ENCODE measurements at regions of chr1 and their contacts with region 1.

Region 1: DNA sequence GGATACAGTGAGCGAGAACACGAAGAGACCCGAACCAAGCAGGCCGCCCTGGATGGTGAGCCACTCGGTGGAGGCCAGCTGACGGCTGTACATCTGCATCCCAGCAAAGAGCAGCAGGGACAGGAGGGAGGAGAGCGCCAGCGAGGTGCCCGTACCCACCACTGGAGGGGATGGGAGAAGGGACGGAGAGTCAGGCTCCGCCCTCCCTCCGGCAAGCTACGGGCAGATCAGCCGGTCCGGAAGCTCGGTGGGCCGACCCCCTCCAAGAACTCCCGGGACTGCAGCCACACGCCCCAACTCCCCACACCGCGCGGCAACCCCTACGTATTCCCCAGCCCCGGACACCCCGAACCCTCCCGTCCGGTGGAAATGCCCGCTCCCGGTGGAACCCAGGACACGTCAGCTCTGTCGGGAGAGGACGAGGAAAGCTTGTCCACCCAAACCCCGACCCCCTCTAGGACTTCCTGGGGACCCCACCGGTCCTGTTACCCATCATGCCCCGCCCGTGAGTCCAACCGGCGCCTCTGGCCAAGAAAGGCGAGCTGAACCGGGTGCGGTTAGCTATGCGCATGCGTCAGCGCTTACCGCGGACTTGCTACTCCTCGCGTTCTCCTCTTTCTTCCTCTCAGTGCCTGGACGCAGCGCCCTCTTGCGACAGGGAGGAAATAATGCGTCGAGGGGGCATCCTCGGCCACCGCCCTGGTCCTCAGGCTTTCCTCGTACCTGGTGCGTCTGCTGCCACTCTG is at the start of gene KRTCAP2:
- DNase-seq: peak; percentile 97
- ATAC-seq: peak; percentile 83
- H3K4me3 Mint-ChIP-seq: peak within 1 kb of the TSS; percentile 96
- H3K27ac Mint-ChIP-seq: peak within 1 kb of the TSS; percentile 98
- H3K4me1 Mint-ChIP-seq: peaks cover 45% of the 10 kb centered on the region
- H3K27me3 Mint-ChIP-seq: no peaks in the 10 kb centered on the region
- CTCF ChIP-seq: peak; percentile 91
- total RNA-seq, gene KRTCAP2: 124 to 125 TPM

Region 2: GRCh38 chr1:155050560-155051341 is 122.2 kb before region 1 on chr1 and contains the start of gene ADAM15:
- CTCF ChIA-PET with region 1: interaction called, 10 read pairs
- POLR2A ChIA-PET with region 1: no interaction called
- intact Hi-C with region 1: no loop called
- DNase-seq: peak; percentile 80
- ATAC-seq: peak; percentile 79
- H3K4me3 Mint-ChIP-seq: peak within 1 kb of the TSS; percentile 88
- H3K27ac Mint-ChIP-seq: peak within 1 kb of the TSS; percentile 60
- H3K4me1 Mint-ChIP-seq: peaks cover 20% of the 10 kb centered on the region
- H3K27me3 Mint-ChIP-seq: no peaks in the 10 kb centered on the region
- CTCF ChIP-seq: peak; percentile 99
- total RNA-seq, gene ADAM15: 36.4 to 37.2 TPM

Region 3: DNA sequence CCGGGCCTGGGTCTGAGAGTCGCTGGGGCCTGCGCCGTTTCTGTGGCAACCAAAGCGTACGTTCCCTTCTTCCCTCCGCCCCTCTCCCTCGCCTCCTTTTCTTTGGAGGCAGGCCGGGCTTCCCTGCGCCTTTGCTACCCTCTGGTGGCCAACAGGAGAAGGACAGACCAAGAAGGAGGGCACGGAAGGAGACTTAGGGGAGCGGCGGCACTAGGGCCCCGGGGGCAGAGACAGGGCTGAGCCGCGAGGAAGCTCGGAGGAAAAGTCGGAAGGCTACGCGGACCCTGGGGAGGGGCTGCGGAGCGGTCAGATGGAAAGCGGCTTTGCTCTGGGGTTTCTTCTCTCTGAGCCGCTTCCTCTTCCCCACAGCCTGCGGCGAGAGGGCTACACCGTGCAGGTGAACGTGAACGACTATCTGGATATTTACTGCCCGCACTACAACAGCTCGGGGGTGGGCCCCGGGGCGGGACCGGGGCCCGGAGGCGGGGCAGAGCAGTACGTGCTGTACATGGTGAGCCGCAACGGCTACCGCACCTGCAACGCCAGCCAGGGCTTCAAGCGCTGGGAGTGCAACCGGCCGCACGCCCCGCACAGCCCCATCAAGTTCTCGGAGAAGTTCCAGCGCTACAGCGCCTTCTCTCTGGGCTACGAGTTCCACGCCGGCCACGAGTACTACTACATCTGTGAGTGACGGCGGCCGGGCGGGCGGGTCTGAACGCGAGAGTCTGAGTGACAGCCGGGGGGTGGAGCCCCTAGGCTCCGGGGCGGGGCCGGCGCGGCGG is 88.0 kb before region 1 on chr1:
- CTCF ChIA-PET with region 1: interaction called, 312 read pairs
- POLR2A ChIA-PET with region 1: interaction called, 8 read pairs
- intact Hi-C with region 1: no loop called
- DNase-seq: peak; percentile 97
- ATAC-seq: peak; percentile 78
- H3K4me3 Mint-ChIP-seq: peak overlapping the region; percentile 91
- H3K27ac Mint-ChIP-seq: peak overlapping the region; percentile 94
- H3K4me1 Mint-ChIP-seq: peaks cover 26% of the 10 kb centered on the region
- H3K27me3 Mint-ChIP-seq: peaks cover 35% of the 10 kb centered on the region
- CTCF ChIP-seq: peak; percentile 89

Region 4: DNA sequence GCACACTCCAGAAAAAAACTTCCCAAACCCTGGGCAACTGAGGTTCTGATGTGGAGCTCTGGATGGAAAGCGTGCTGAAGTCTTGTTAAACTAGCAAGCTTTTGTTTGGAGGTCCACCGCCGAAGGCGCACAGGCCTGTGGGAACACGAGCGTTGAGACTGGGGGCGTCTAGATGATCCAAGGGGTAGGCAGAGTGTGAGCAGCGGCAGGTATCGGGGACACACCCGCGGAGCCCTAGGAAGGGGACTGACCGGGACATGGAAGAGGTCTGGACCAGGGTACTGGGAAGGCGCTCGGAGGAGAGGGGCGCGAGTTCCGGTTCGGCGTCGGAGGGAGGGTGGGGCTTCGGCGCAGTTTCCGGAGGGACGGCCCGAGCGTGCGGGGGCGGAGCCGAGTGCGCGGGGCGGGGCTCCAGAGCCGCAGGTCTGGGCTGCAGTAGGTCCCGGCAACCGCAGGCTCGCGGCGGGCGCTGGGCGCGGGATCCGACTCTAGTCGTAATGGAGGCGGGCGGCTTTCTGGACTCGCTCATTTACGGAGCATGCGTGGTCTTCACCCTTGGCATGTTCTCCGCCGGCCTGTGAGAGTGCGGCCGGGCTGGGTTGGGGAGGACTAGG is 37.4 kb before region 1 on chr1 and contains the start of gene SLC50A1:
- CTCF ChIA-PET with region 1: interaction called, 69 read pairs
- POLR2A ChIA-PET with region 1: interaction called, 4 read pairs
- intact Hi-C with region 1: no loop called
- DNase-seq: peak; percentile 96
- ATAC-seq: peak; percentile 80
- H3K4me3 Mint-ChIP-seq: peak within 1 kb of the TSS; percentile 99
- H3K27ac Mint-ChIP-seq: peak within 1 kb of the TSS; percentile 99
- H3K4me1 Mint-ChIP-seq: peaks cover 33% of the 10 kb centered on the region
- H3K27me3 Mint-ChIP-seq: no peaks in the 10 kb centered on the region
- CTCF ChIP-seq: no peak
- total RNA-seq, gene SLC50A1: 59.7 to 64.0 TPM

Region 5: DNA sequence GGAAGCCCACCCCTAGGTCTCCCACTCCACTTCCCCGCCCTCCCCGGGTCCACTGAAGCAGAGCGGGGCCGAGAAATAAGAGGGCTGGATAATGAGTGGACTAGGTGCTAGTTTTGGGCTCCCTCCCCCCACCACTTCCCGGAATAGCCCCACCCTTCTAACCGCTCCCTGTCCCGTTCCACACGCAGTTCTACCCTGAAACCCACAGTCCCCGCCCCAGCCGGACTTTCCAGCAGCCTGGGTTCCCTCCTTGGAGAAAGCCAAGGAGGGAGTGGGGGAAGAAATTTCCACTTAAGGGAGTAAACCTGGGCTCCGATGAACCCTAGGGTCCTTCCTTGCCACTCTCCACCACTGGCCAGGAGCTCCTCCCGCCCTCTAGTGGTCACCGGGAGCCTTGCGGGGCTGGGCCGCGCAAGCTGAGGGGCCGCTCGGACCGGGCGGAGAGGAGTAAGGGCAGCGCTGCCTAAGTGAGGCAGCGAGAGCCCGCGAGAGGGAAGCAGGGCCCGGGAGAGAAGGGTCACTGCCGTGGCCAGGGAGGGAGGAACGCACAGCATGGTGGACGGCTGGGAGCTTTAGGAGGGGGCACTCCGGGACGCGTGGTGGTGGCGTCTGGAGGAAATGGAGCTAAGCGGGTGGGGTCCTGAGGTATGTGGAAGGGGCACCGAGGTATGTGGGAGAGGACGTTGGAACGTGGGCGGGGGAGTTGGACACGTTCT is 20.5 kb after region 1 on chr1:
- CTCF ChIA-PET with region 1: interaction called, 175 read pairs
- POLR2A ChIA-PET with region 1: interaction called, 57 read pairs
- intact Hi-C with region 1: no loop called
- DNase-seq: peak; percentile 84
- ATAC-seq: peak; percentile 62
- H3K4me3 Mint-ChIP-seq: peak overlapping the region; percentile 90
- H3K27ac Mint-ChIP-seq: peak overlapping the region; percentile 99
- H3K4me1 Mint-ChIP-seq: peaks cover 28% of the 10 kb centered on the region
- H3K27me3 Mint-ChIP-seq: no peaks in the 10 kb centered on the region
- CTCF ChIP-seq: peak; percentile 98

Region 6: DNA sequence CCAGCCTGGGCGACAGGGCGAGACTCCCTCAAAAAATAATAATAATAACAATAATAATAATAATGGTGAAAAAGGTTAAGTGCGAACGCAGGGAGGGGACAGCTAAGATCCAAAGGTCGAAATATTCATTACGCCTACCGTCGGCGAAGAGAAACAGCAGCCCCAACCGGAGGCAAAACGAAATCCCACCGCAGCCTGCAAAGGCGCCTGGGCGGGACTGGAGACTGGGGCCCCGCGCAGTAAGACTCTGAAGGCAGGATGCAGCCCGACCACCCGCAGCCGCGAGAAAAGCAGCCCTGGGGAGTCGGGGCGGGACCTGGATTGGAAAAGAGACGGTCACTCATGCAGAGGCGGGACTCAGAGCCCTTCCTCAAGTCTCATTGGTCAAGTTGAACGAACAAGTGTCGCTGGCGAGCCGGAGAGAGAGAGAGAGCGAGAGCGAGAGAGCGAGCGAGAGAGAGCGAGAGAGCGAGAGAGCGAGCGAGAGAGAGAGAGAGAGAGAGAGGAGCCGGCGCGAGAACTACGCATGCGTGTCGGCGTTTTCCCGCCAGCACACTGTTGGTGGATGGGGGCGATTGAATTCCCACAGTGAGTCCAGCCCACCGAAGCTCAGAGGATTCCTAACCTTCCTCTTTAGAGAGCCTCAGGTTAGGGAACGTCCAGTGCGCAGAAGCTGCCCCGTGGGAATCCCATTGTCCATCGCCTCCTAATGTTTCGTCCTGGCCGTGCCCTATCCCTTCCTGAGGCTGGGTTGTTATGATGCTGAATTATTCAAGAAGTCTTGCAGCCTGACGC is 71.7 kb after region 1 on chr1:
- CTCF ChIA-PET with region 1: interaction called, 10 read pairs
- POLR2A ChIA-PET with region 1: interaction called, 5 read pairs
- intact Hi-C with region 1: no loop called
- DNase-seq: peak; percentile 100
- ATAC-seq: peak; percentile 97
- H3K4me3 Mint-ChIP-seq: peak overlapping the region; percentile 71
- H3K27ac Mint-ChIP-seq: peak overlapping the region; percentile 95
- H3K4me1 Mint-ChIP-seq: peaks cover 41% of the 10 kb centered on the region
- H3K27me3 Mint-ChIP-seq: peaks cover 2% of the 10 kb centered on the region
- CTCF ChIP-seq: peak; percentile 39

Region 7: GRCh38 chr1:155540000-155540874 is 367.3 kb after region 1 on chr1:
- CTCF ChIA-PET with region 1: no interaction called
- POLR2A ChIA-PET with region 1: no interaction called
- intact Hi-C with region 1: no loop called
- DNase-seq: peak; percentile 21
- ATAC-seq: no peak
- H3K4me3 Mint-ChIP-seq: no peak overlapping the region
- H3K27ac Mint-ChIP-seq: peak overlapping the region; percentile 76
- H3K4me1 Mint-ChIP-seq: peaks cover 46% of the 10 kb centered on the region
- H3K27me3 Mint-ChIP-seq: no peaks in the 10 kb centered on the region
- CTCF ChIP-seq: no peak